Activated CD4-positive, alpha-beta T cell treated with anti-CD3 and anti-CD28 coated beads, Interleukin-2, amount 10 ng/mL, durations not matched to agents 7 days and 5 days (primary cell): ENCODE measurements at regions of chr15 and their contacts with region 1.

Region 1: GRCh38 chr15:91975241-91975978 is 121.9 kb downstream of the SLCO3A1 start:
- DNase-seq: no peak
- H3K4me3 Mint-ChIP-seq: no peak overlapping the region
- H3K27ac Mint-ChIP-seq: no peak overlapping the region
- H3K4me1 Mint-ChIP-seq: peaks cover 2% of the 10 kb centered on the region
- H3K27me3 Mint-ChIP-seq: no peaks in the 10 kb centered on the region

Region 2: GRCh38 chr15:91498046-91498748 is 477.2 kb before region 1 on chr15:
- CTCF ChIA-PET with region 1: no interaction called
- POLR2A ChIA-PET with region 1: interaction called, 11 read pairs
- DNase-seq: no peak
- H3K4me3 Mint-ChIP-seq: no peak overlapping the region
- H3K27ac Mint-ChIP-seq: no peak overlapping the region
- H3K4me1 Mint-ChIP-seq: peaks cover 1% of the 10 kb centered on the region
- H3K27me3 Mint-ChIP-seq: peaks cover 25% of the 10 kb centered on the region